ENCODE measurements at regions of chr1 and their contacts with region 1.

Region 1: DNA sequence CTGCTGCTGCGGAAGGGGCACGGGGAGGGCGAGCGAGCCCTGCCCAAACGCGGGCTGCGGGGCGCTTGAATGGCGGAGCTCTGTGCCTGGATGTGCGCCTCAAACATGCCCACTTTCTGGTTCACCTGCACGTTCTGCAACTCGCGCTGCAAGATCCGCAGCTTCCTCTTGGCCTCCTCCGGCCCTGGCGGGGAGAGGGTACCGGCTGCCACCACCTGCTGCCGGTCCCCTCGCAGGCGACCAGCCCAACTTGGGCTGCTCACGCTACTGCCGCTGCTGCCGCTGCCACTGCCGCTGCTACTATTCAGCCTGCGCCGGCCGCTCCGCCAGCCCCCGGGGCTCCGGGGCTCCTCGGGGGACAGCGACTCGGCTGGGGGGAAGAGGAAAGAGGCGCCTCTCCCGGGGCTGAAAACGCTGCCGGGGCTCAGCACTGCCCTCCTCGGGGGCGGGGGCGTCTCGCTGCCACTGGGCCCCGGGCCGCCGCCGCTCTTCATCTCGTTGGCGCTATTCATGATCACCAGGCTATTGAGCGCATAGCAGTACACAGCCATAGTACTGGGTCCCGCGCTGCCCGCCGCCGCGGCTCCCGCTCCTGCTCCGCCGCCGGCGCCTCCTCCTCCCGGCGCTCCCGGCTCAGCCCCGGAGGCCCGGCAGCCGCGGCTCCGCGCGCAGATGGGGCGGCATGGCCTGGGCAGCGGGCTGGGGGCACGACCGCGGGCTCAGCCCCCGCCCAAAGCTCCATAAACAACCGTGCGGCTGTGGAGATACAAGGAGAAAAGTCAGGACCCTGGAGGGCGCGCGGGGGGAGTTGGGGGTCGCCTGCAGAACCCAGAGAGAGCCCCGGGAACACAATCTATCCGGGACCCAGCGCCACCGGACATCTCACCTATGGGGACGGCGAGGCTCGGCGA is 1.9 kb downstream of the ITPKB start:
- DNase-seq: peak in 13 of 14 experiments; percentile 38 to 78 (median 53)
- ATAC-seq: peak; percentile 6
- H3K4me3 ChIP-seq: peak overlapping the region; percentile 93
- H3K4me3 Mint-ChIP-seq: peak overlapping the region; percentile 98
- H3K27ac ChIP-seq: peak overlapping the region; percentile 59 to 92
- H3K27ac Mint-ChIP-seq: peak overlapping the region; percentile 95
- H3K4me1 ChIP-seq: peaks cover 56% of the 10 kb centered on the region
- H3K4me1 Mint-ChIP-seq: peaks cover 56% of the 10 kb centered on the region
- H3K27me3 ChIP-seq: no peaks in the 10 kb centered on the region
- H3K27me3 Mint-ChIP-seq: peaks cover 7% of the 10 kb centered on the region
- CTCF ChIP-seq: no peak

Region 2: GRCh38 chr1:226293553-226293920 is 443.6 kb before region 1 on chr1:
- CTCF ChIA-PET with region 1: no interaction called
- POLR2A ChIA-PET with region 1: no interaction called
- intact Hi-C with region 1: no loop called
- DNase-seq: no peak
- ATAC-seq: no peak
- H3K4me3 ChIP-seq: no peak overlapping the region
- H3K4me3 Mint-ChIP-seq: no peak overlapping the region
- H3K27ac ChIP-seq: no peak overlapping the region
- H3K27ac Mint-ChIP-seq: no peak overlapping the region
- H3K4me1 ChIP-seq: no peaks in the 10 kb centered on the region
- H3K4me1 Mint-ChIP-seq: no peaks in the 10 kb centered on the region
- H3K27me3 ChIP-seq: no peaks in the 10 kb centered on the region
- H3K27me3 Mint-ChIP-seq: no peaks in the 10 kb centered on the region
- CTCF ChIP-seq: no peak

Region 3: GRCh38 chr1:226547754-226548191 is 189.4 kb before region 1 on chr1:
- CTCF ChIA-PET with region 1: no interaction called
- POLR2A ChIA-PET with region 1: no interaction called
- intact Hi-C with region 1: no loop called
- DNase-seq: peak; percentile 33 to 81 (median 56)
- ATAC-seq: peak; percentile 66
- H3K4me3 ChIP-seq: peak overlapping the region; percentile 42
- H3K4me3 Mint-ChIP-seq: peak overlapping the region; percentile 32
- H3K27ac ChIP-seq: no peak overlapping the region
- H3K27ac Mint-ChIP-seq: no peak overlapping the region
- H3K4me1 ChIP-seq: peaks cover 24% of the 10 kb centered on the region
- H3K4me1 Mint-ChIP-seq: peaks cover 14% of the 10 kb centered on the region
- H3K27me3 ChIP-seq: peaks cover 34 to 35% of the 10 kb centered on the region in 2 experiments
- H3K27me3 Mint-ChIP-seq: peaks cover 49% of the 10 kb centered on the region
- CTCF ChIP-seq: peak; percentile 85

Region 4: GRCh38 chr1:226626577-226626956 is 110.6 kb before region 1 on chr1:
- CTCF ChIA-PET with region 1: interaction called, 12 read pairs
- POLR2A ChIA-PET with region 1: interaction called, 9 read pairs
- intact Hi-C with region 1: no loop called
- DNase-seq: peak; percentile 65 to 88 (median 73)
- ATAC-seq: peak; percentile 97
- H3K4me3 ChIP-seq: peak overlapping the region; percentile 43
- H3K4me3 Mint-ChIP-seq: no peak overlapping the region
- H3K27ac ChIP-seq: no peak overlapping the region
- H3K27ac Mint-ChIP-seq: peak overlapping the region; percentile 46
- H3K4me1 ChIP-seq: peaks cover 18% of the 10 kb centered on the region
- H3K4me1 Mint-ChIP-seq: peaks cover 22% of the 10 kb centered on the region
- H3K27me3 ChIP-seq: no peaks in the 10 kb centered on the region
- H3K27me3 Mint-ChIP-seq: no peaks in the 10 kb centered on the region
- CTCF ChIP-seq: peak; percentile 99

Region 5: DNA sequence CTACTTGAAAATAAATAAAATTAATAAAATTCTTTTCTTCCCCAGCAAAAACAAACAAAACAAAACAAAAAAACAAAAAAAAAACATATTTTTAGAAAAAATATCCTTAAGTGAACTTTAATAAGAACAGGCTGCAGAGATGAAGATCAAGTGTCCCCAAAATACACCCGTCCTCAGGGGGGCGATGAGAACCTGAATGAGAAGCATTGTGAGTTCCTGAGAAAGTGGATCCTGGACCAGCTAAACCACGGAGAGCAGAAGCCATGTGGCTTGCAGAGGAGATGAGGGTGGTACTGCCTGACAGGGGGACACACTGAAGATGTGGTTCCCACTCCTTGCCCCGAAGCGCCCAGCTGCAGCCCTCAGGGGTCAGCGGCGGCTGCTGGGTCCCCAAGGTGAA is 87.4 kb before region 1 on chr1:
- CTCF ChIA-PET with region 1: interaction called, 4 read pairs
- POLR2A ChIA-PET with region 1: interaction called, 26 read pairs
- intact Hi-C with region 1: loop called in 1 of 2 experiments (anchors 5 kb)
- DNase-seq: peak in 9 of 14 experiments; percentile 34 to 72 (median 53)
- ATAC-seq: peak; percentile 14
- H3K4me3 ChIP-seq: no peak overlapping the region
- H3K4me3 Mint-ChIP-seq: peak overlapping the region; percentile 12
- H3K27ac ChIP-seq: no peak overlapping the region
- H3K27ac Mint-ChIP-seq: no peak overlapping the region
- H3K4me1 ChIP-seq: peaks cover 45% of the 10 kb centered on the region
- H3K4me1 Mint-ChIP-seq: peaks cover 26% of the 10 kb centered on the region
- H3K27me3 ChIP-seq: no peaks in the 10 kb centered on the region
- H3K27me3 Mint-ChIP-seq: no peaks in the 10 kb centered on the region
- CTCF ChIP-seq: peak; percentile 42

Region 6: GRCh38 chr1:226679853-226680516 is 57.2 kb before region 1 on chr1:
- CTCF ChIA-PET with region 1: interaction called, 4 read pairs
- POLR2A ChIA-PET with region 1: interaction called, 10 read pairs
- intact Hi-C with region 1: loop called (anchors 2 to 10 kb)
- DNase-seq: peak; percentile 44 to 88 (median 74)
- ATAC-seq: peak; percentile 15
- H3K4me3 ChIP-seq: peak overlapping the region; percentile 41
- H3K4me3 Mint-ChIP-seq: peak overlapping the region; percentile 87
- H3K27ac ChIP-seq: peak overlapping the region; percentile 86 to 93
- H3K27ac Mint-ChIP-seq: peak overlapping the region; percentile 98
- H3K4me1 ChIP-seq: peaks cover 99% of the 10 kb centered on the region
- H3K4me1 Mint-ChIP-seq: peaks cover 100% of the 10 kb centered on the region
- H3K27me3 ChIP-seq: no peaks in the 10 kb centered on the region
- H3K27me3 Mint-ChIP-seq: no peaks in the 10 kb centered on the region
- CTCF ChIP-seq: no peak

Region 7: GRCh38 chr1:226708342-226708780 is 28.8 kb before region 1 on chr1:
- CTCF ChIA-PET with region 1: interaction called, 4 read pairs
- POLR2A ChIA-PET with region 1: interaction called, 16 read pairs
- intact Hi-C with region 1: loop called in 1 of 2 experiments (anchors 2 kb)
- DNase-seq: peak in 2 of 14 experiments; percentile 51 to 58
- ATAC-seq: peak; percentile 13
- H3K4me3 ChIP-seq: no peak overlapping the region
- H3K4me3 Mint-ChIP-seq: peak overlapping the region; percentile 87
- H3K27ac ChIP-seq: peak overlapping the region; percentile 31 to 75
- H3K27ac Mint-ChIP-seq: peak overlapping the region; percentile 95
- H3K4me1 ChIP-seq: peaks cover 79% of the 10 kb centered on the region
- H3K4me1 Mint-ChIP-seq: peaks cover 95% of the 10 kb centered on the region
- H3K27me3 ChIP-seq: no peaks in the 10 kb centered on the region
- H3K27me3 Mint-ChIP-seq: peaks cover 11% of the 10 kb centered on the region
- CTCF ChIP-seq: peak; percentile 18

Region 8: GRCh38 chr1:226827968-226828513 is 90.9 kb after region 1 on chr1:
- CTCF ChIA-PET with region 1: interaction called, 10 read pairs
- POLR2A ChIA-PET with region 1: interaction called, 17 read pairs
- intact Hi-C with region 1: loop called (anchors 1 kb)
- DNase-seq: peak; percentile 89 to 98 (median 94)
- ATAC-seq: peak; percentile 98
- H3K4me3 ChIP-seq: peak overlapping the region; percentile 28
- H3K4me3 Mint-ChIP-seq: peak overlapping the region; percentile 60
- H3K27ac ChIP-seq: no peak overlapping the region
- H3K27ac Mint-ChIP-seq: peak overlapping the region; percentile 75
- H3K4me1 ChIP-seq: peaks cover 23% of the 10 kb centered on the region
- H3K4me1 Mint-ChIP-seq: peaks cover 43% of the 10 kb centered on the region
- H3K27me3 ChIP-seq: no peaks in the 10 kb centered on the region
- H3K27me3 Mint-ChIP-seq: no peaks in the 10 kb centered on the region
- CTCF ChIP-seq: peak; percentile 91

Measured in CD4-positive, alpha-beta T cell (primary cell).